ENCODE measurements at regions of chr1 and their contacts with region 1.

Region 1: GRCh38 chr1:78839704-78840277 is 166.7 kb downstream of the ADGRL4 start:
- DNase-seq: peak; percentile 27
- H3K4me3 Mint-ChIP-seq: no peak overlapping the region
- H3K27ac Mint-ChIP-seq: no peak overlapping the region
- H3K4me1 Mint-ChIP-seq: peaks cover 7% of the 10 kb centered on the region
- H3K27me3 Mint-ChIP-seq: no peaks in the 10 kb centered on the region

Region 2: GRCh38 chr1:79353224-79353623 is 513.4 kb after region 1 on chr1:
- CTCF ChIA-PET with region 1: interaction called, 36 read pairs
- DNase-seq: no peak
- H3K4me3 Mint-ChIP-seq: no peak overlapping the region
- H3K27ac Mint-ChIP-seq: no peak overlapping the region
- H3K4me1 Mint-ChIP-seq: no peaks in the 10 kb centered on the region
- H3K27me3 Mint-ChIP-seq: no peaks in the 10 kb centered on the region